ENCODE measurements at regions of chr4 and their contacts with region 1.

Region 1: GRCh38 chr4:119212234-119212963 is at the start of gene USP53:
- DNase-seq: peak; percentile 94
- ATAC-seq: peak; percentile 96
- H3K4me3 ChIP-seq: peak within 1 kb of the TSS; percentile 76 to 84 (median 78)
- H3K27ac ChIP-seq: peak within 1 kb of the TSS; percentile 96
- H3K4me1 ChIP-seq: peaks cover 19% of the 10 kb centered on the region
- H3K27me3 ChIP-seq: no peaks in the 10 kb centered on the region; a peak in 1 of 5 replicates
- CTCF ChIP-seq: no peak
- EP300 ChIP-seq: no peak
- POLR2A ChIP-seq: peak; percentile 93 to 98
- RAD21 ChIP-seq: peak; percentile 44; the same call in 1 of the 2 replicates
- total RNA-seq, gene USP53: 8.1 and 11.0 TPM in 2 replicates

Region 2: DNA sequence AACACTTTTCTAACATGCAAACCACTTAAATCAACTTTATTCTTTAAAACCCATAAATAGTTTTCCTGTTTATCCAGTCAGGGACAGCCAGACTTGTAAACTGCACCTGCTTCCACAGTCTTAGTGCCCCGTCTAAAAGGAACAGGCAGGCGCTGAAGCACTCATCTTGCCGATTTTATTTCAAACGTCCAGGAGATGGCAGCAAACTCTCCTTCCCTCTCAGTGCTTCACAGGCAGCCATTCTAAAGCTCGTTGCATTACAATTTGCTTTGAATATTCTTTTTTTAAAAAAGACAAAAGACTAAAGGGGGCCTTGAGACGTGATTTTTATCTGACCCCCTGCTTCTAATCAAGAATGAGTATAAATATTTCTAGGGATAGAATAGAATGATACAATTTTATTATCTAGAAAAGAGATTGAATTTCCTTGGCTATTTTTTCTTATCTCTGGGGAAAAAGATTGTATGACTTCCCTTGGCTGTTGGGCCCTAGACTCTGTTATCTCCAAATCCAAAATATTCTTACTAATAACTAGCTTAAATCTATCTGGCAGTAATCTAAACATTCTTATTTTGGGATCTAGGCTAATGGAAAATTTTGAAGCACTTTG is 170.3 kb before region 1 on chr4:
- CTCF ChIA-PET with region 1: no interaction called
- POLR2A ChIA-PET with region 1: interaction called, 5 read pairs
- in situ Hi-C with region 1: loop called (anchors 10 kb)
- intact Hi-C with region 1: loop called (anchors 1 kb)
- DNase-seq: peak; percentile 66
- ATAC-seq: peak; percentile 96
- H3K4me3 ChIP-seq: no peak overlapping the region
- H3K27ac ChIP-seq: no peak overlapping the region
- H3K4me1 ChIP-seq: no peaks in the 10 kb centered on the region
- H3K27me3 ChIP-seq: 0 out of 5 replicates have a peak, but pooled peaks cover 0 to 4% of the 10 kb centered on the region in 2 experiments
- CTCF ChIP-seq: peak; percentile 80
- EP300 ChIP-seq: no peak
- POLR2A ChIP-seq: no peak
- RAD21 ChIP-seq: peak; percentile 66

Region 3: DNA sequence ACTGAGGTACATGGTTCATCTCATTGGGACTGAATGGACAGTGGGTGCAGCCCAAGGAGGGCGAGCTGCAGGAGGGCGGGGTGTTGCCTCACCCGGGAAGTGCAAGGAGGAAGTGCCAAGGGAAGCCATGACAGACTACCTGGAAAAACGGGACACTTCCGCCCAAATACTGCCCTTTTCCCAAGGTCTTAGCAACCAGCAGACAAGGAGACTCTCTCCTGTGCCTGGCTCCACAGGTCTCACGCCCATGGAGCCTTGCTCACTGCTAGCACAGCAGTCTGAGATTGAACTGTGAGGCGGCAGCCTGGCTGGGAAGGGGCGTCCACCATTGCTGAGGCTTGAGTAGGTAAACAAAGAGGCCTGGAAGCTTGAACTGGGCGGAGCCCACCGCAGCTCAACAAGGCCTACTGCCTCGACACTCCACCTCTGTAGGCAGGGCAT is 14.6 kb before region 1 on chr4:
- CTCF ChIA-PET with region 1: no interaction called
- POLR2A ChIA-PET with region 1: interaction called, 30 read pairs
- in situ Hi-C with region 1: no loop called
- intact Hi-C with region 1: no loop called
- DNase-seq: peak; percentile 10
- ATAC-seq: peak; percentile 67
- H3K4me3 ChIP-seq: peak overlapping the region; percentile 55 to 72 (median 62)
- H3K27ac ChIP-seq: peak overlapping the region; percentile 18
- H3K4me1 ChIP-seq: no peaks in the 10 kb centered on the region
- H3K27me3 ChIP-seq: no peaks in the 10 kb centered on the region; a peak in 1 of 5 replicates
- CTCF ChIP-seq: 0 out of 2 replicates have a peak, but pooled peaks have one; percentile 4
- EP300 ChIP-seq: no peak
- POLR2A ChIP-seq: no peak
- RAD21 ChIP-seq: no peak

Region 4: DNA sequence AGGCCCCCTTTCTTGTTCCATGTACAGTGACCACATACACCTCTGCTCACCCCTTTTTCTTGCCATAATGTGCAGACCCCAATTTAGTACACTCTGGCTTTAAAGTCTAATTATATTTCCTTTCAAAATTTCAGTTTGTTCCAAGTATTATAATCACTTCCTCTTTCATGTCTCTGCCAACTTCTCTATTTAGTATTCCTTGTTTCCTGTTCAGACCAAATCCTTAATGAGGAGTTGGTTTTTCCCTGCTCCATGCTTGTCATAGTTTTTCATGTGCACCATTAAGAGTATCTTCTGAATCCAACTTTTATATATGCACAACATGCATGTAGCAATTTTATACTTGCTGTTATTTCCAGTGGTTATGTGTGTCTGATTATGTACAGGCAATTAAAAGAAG is 32.4 kb after region 1 on chr4:
- CTCF ChIA-PET with region 1: no interaction called
- POLR2A ChIA-PET with region 1: no interaction called
- in situ Hi-C with region 1: no loop called
- intact Hi-C with region 1: loop called (anchors 5 kb)
- DNase-seq: no peak
- ATAC-seq: no peak
- H3K4me3 ChIP-seq: no peak overlapping the region
- H3K27ac ChIP-seq: no peak overlapping the region
- H3K4me1 ChIP-seq: no peaks in the 10 kb centered on the region
- H3K27me3 ChIP-seq: no peaks in the 10 kb centered on the region
- CTCF ChIP-seq: no peak
- EP300 ChIP-seq: no peak
- POLR2A ChIP-seq: no peak
- RAD21 ChIP-seq: no peak

Region 5: GRCh38 chr4:119300101-119300978 is 87.9 kb after region 1 on chr4:
- CTCF ChIA-PET with region 1: no interaction called
- POLR2A ChIA-PET with region 1: interaction called, 30 read pairs
- in situ Hi-C with region 1: no loop called
- intact Hi-C with region 1: loop called (anchors 1 kb)
- DNase-seq: peak; percentile 96
- ATAC-seq: peak; percentile 96
- H3K4me3 ChIP-seq: peak overlapping the region; percentile 85 to 100 (median 91)
- H3K27ac ChIP-seq: peak overlapping the region; percentile 89
- H3K4me1 ChIP-seq: peaks cover 66% of the 10 kb centered on the region
- H3K27me3 ChIP-seq: peaks cover 0 to 9% of the 10 kb centered on the region in 2 experiments; a peak in 2 of 5 replicates
- CTCF ChIP-seq: peak; percentile 53
- EP300 ChIP-seq: peak in 1 of 2 experiments; percentile 48; a peak in 2 of 4 replicates
- POLR2A ChIP-seq: peak; percentile 81 to 87
- RAD21 ChIP-seq: no peak

Region 6: GRCh38 chr4:119314356-119314755 is 102.0 kb after region 1 on chr4:
- CTCF ChIA-PET with region 1: no interaction called
- POLR2A ChIA-PET with region 1: no interaction called
- in situ Hi-C with region 1: no loop called
- intact Hi-C with region 1: no loop called
- DNase-seq: peak; percentile 41
- ATAC-seq: peak; percentile 75
- H3K4me3 ChIP-seq: no peak overlapping the region
- H3K27ac ChIP-seq: no peak overlapping the region
- H3K4me1 ChIP-seq: no peaks in the 10 kb centered on the region
- H3K27me3 ChIP-seq: no peaks in the 10 kb centered on the region
- CTCF ChIP-seq: peak; percentile 61
- EP300 ChIP-seq: no peak
- POLR2A ChIP-seq: no peak
- RAD21 ChIP-seq: peak; percentile 38; the same call in 1 of the 2 replicates

Region 7: DNA sequence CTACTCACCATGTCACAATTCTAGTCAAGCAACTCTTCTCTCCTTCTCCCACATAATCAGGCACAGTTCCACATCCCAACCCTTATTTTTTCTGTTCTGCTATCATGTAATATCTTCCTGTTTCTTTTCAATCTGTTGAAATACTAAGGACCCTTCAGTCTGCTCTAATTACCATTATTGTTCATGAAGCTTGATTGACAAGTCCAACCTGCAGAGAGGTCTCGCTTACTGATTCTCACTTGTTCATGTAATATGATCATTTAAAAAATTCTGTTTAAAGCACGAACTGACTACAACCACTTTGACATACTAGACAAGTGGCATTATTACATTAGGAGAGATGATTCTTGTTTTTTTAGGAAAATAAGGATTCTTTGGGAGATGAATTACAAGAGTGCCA is 962.9 kb after region 1 on chr4:
- CTCF ChIA-PET with region 1: no interaction called
- POLR2A ChIA-PET with region 1: no interaction called
- in situ Hi-C with region 1: no loop called
- intact Hi-C with region 1: no loop called
- DNase-seq: no peak
- ATAC-seq: no peak
- H3K4me3 ChIP-seq: no peak overlapping the region
- H3K27ac ChIP-seq: no peak overlapping the region
- H3K4me1 ChIP-seq: no peaks in the 10 kb centered on the region
- H3K27me3 ChIP-seq: no peaks in the 10 kb centered on the region
- CTCF ChIP-seq: no peak
- EP300 ChIP-seq: no peak
- POLR2A ChIP-seq: no peak
- RAD21 ChIP-seq: no peak

Region 8: DNA sequence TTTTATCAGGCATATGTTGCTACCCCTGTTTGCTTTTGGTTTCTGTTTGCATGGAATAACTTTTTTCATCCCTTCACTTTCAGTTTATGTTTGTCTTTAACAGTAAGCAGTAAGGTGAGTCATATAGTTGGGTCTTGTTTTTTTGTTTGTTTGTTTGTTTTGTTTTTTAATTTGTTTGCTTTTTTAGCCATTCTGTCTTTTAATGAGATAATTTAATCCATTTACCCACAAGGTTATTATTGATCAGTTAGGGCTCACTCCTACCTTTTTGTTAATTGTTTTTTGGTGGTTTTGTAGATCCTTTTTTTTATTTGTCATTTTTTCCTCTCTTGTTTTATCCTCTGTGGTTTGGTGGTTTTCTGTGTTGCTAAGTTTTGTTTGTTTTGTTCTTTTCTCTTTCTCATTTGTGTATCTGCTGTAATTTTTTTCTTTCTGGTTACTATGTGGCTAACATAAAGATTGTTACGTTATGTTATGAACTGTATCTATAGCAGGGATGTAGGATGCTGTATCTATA is 1233.7 kb after region 1 on chr4:
- CTCF ChIA-PET with region 1: no interaction called
- POLR2A ChIA-PET with region 1: no interaction called
- in situ Hi-C with region 1: no loop called
- intact Hi-C with region 1: no loop called
- DNase-seq: no peak
- ATAC-seq: no peak
- H3K4me3 ChIP-seq: no peak overlapping the region
- H3K27ac ChIP-seq: no peak overlapping the region
- H3K4me1 ChIP-seq: no peaks in the 10 kb centered on the region
- H3K27me3 ChIP-seq: no peaks in the 10 kb centered on the region
- CTCF ChIP-seq: no peak
- EP300 ChIP-seq: no peak
- POLR2A ChIP-seq: no peak
- RAD21 ChIP-seq: no peak

Region 9: GRCh38 chr4:120785202-120785601 is 1572.8 kb after region 1 on chr4:
- CTCF ChIA-PET with region 1: no interaction called
- POLR2A ChIA-PET with region 1: no interaction called
- in situ Hi-C with region 1: no loop called
- intact Hi-C with region 1: no loop called
- DNase-seq: no peak
- ATAC-seq: no peak
- H3K4me3 ChIP-seq: no peak overlapping the region
- H3K27ac ChIP-seq: no peak overlapping the region
- H3K4me1 ChIP-seq: no peaks in the 10 kb centered on the region
- H3K27me3 ChIP-seq: no peaks in the 10 kb centered on the region; a peak in 1 of 5 replicates
- CTCF ChIP-seq: no peak
- EP300 ChIP-seq: no peak
- POLR2A ChIP-seq: no peak
- RAD21 ChIP-seq: no peak

Measured in HepG2 (cell line).